Calu3 (cell line): ENCODE measurements at regions of chr19 and their contacts with region 1.

Region 1: GRCh38 chr19:37896180-37896579 is 10.2 kb downstream of the WDR87 start:
- DNase-seq: no peak
- H3K4me3 Mint-ChIP-seq: no peak overlapping the region
- H3K27ac Mint-ChIP-seq: no peak overlapping the region
- H3K4me1 Mint-ChIP-seq: no peaks in the 10 kb centered on the region
- H3K27me3 Mint-ChIP-seq: peaks cover 41% of the 10 kb centered on the region
- CTCF ChIP-seq: no peak

Region 2: DNA sequence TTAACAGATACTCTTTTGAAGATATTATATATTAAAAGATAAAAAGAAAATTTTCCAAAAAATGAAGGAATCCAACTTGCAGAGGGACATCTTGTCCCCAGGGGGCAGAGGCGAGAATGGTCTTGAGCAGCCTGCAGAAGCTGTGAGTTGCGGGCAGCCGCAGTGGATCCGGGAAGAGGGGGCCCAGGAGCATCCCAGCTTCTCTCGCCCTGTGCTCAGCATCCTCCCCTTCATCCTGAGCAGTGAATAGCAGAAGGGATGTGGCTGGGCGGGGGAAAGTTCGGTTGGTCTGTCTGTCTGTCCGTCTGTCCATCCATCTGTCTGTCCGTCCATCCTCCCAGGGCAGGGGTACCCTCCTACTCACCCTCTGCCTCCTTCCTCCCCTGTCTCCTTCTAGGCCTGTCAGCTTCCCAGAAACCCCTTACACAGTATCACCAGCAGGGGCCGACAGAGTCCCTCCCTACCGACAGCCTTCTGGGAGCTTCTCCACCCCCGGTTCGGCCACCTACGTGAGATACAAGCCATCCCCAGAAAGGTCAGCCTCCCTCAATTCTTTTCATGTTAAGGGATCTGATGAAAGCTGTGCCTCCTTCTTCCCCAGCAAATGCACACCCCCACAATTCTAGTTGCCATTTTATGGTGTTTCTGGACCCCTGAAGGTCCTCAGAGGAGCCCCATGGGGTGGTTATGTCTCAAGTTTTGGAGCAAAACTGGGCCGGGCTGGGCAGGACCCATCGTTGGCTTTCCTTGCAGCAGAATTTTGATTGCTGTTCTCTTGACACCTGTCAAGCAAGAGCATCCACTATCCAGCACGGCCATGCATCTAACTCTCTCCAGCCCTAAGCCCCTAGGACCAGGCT is 246.2 kb after region 1 on chr19:
- CTCF ChIA-PET with region 1: no interaction called
- intact Hi-C with region 1: loop called (anchors 2 kb)
- DNase-seq: peak; percentile 58
- H3K4me3 Mint-ChIP-seq: no peak overlapping the region
- H3K27ac Mint-ChIP-seq: no peak overlapping the region
- H3K4me1 Mint-ChIP-seq: no peaks in the 10 kb centered on the region
- H3K27me3 Mint-ChIP-seq: no peaks in the 10 kb centered on the region
- CTCF ChIP-seq: peak; percentile 62

Region 3: DNA sequence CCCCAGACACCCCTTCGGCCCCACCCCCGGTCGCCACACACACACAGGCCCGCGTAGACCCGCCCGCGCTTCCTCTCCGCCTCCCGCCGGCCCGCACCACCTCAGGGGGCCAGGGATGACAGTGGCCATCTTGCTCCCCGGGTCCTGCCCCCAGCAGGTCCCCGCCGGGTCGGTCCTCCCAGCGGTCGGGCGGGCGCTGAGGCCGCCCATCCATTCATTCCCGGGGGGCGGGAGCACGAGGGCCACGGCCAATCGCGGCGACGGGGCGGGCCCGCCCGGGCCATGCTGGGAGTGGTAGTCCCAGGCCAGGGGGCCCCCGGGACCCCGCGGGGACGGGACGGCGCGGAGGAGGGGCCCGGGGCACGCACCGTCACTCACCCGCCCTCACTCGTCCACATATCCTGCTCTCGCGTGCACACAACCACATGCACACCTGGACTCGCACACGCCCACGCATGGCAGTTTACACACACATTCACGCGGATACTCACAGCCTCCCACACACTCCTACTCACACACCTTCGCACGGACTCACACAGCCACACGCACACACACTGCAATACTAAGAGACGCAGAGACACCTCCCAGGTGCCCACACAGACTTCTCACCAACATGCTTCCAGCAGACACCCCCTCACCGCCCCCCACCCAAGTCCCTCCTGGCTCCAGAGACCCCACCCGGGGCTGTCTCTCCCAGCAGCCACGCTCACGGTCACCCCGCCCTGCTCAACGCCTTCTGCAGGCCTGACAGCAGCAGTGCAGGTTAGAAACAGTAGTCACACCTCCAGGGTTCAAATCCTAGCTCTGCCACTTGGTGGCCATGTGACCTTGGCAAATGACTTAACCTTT is 328.1 kb after region 1 on chr19 and contains the start of gene DPF1:
- CTCF ChIA-PET with region 1: no interaction called
- intact Hi-C with region 1: loop called (anchors 5 kb)
- DNase-seq: peak; percentile 93
- H3K4me3 Mint-ChIP-seq: peak within 1 kb of the TSS; percentile 39
- H3K27ac Mint-ChIP-seq: no peak within 1 kb of the TSS
- H3K4me1 Mint-ChIP-seq: peaks cover 25% of the 10 kb centered on the region
- H3K27me3 Mint-ChIP-seq: peaks cover 80% of the 10 kb centered on the region
- CTCF ChIP-seq: peak; percentile 33
- total RNA-seq, gene DPF1: 1.0 and 1.5 TPM in 2 replicates